Psoas muscle (tissue), 8 donors: ENCODE measurements at regions of chr21 and their contacts with region 1.

Region 1: GRCh38 chr21:36104317-36105300 is 30.3 kb upstream of the CBR3 start:
- DNase-seq: peak; percentile 60 to 72
- ATAC-seq: peak; percentile 47 to 87 (median 82)
- H3K4me3 ChIP-seq: peak overlapping the region; percentile 38
- H3K27ac ChIP-seq: no peak overlapping the region
- H3K4me1 ChIP-seq: no peaks in the 10 kb centered on the region
- H3K27me3 ChIP-seq: no peaks in the 10 kb centered on the region
- CTCF ChIP-seq: peak; percentile 48

Region 2: DNA sequence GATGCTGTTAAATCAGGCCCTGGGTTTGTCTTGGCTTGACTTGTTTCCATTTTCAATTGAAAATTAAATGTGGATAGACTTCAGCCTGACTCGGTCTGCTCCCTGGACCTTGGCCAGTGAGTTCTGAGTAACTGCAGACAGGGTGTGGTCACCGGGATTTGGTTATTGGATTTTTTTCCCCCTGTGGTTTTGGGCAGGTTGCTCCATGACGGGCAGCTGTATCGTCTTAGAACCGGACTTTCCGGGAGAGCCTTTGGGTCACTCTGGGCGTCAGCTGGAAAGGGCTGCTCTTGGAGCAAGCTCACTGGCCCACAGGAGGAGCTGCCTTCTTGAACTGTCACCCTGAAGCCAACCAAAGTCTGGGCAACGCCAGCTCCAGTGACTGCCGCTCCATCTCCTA is 1360.8 kb before region 1 on chr21:
- intact Hi-C with region 1: no loop called
- DNase-seq: peak; percentile 56 to 72
- ATAC-seq: peak; percentile 18 to 82 (median 71)
- H3K4me3 ChIP-seq: no peak overlapping the region
- H3K27ac ChIP-seq: peak overlapping the region; percentile 36
- H3K4me1 ChIP-seq: peaks cover 8% of the 10 kb centered on the region
- H3K27me3 ChIP-seq: peaks cover 0 to 5% (median 0%) of the 10 kb centered on the region in 3 donors
- CTCF ChIP-seq: no peak

Region 3: GRCh38 chr21:36035381-36035791 is 69.2 kb before region 1 on chr21:
- intact Hi-C with region 1: loop called in 1 of 2 experiments (anchors 10 kb)
- DNase-seq: no peak
- ATAC-seq: no peak
- H3K4me3 ChIP-seq: no peak overlapping the region
- H3K27ac ChIP-seq: no peak overlapping the region
- H3K4me1 ChIP-seq: peaks cover 12% of the 10 kb centered on the region
- H3K27me3 ChIP-seq: no peaks in the 10 kb centered on the region
- CTCF ChIP-seq: no peak

Region 4: DNA sequence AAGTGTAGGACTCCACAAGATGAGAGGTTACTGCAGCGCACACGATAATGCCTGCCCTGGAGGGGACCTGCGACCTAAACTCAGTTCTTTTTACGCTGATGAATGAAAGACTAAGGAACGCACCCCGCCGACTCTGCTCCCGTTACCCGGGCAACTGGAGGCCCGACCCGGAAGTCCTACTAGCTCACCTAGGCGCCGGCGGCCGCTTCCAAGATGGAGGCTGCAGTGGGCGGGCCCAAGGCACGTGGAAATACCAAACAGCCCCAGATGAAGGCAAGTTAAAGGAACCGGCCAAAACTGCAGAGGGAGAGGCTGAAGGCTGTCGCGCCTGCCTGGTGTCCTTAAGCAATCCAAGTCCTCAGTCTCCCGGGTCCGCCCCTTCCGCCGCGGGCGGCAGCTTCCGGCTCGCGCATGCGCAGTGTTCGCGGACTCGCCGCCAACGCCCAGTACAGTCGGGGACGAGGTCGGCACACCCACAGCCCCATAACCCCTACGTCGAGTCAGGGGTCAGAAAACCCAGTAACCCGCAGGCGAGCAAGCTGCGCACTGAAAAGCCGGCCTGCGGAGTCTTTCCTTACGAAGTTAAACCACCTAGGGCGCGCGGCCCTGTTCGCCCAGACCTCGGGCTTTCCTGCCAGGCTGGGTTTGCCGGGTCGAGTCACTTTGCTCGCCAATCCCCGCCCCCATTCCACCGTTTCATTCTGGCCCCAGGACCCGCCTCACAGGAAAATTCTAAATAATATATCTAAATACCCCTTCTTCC is 44.3 kb before region 1 on chr21 and contains the start of gene SETD4:
- intact Hi-C with region 1: loop called in 1 of 2 experiments (anchors 5 kb)
- DNase-seq: peak; percentile 94 to 97
- ATAC-seq: peak; percentile 94 to 97 (median 96)
- H3K4me3 ChIP-seq: peak within 1 kb of the TSS; percentile 95
- H3K27ac ChIP-seq: peak within 1 kb of the TSS; percentile 94
- H3K4me1 ChIP-seq: peaks cover 31% of the 10 kb centered on the region
- H3K27me3 ChIP-seq: no peaks in the 10 kb centered on the region
- CTCF ChIP-seq: no peak
- total RNA-seq, gene SETD4: 6.5 to 12.1 (median 10.2) TPM